CD4-positive, alpha-beta memory T cell (primary cell): ENCODE measurements at regions of chr11 and their contacts with region 1.

Region 1: DNA sequence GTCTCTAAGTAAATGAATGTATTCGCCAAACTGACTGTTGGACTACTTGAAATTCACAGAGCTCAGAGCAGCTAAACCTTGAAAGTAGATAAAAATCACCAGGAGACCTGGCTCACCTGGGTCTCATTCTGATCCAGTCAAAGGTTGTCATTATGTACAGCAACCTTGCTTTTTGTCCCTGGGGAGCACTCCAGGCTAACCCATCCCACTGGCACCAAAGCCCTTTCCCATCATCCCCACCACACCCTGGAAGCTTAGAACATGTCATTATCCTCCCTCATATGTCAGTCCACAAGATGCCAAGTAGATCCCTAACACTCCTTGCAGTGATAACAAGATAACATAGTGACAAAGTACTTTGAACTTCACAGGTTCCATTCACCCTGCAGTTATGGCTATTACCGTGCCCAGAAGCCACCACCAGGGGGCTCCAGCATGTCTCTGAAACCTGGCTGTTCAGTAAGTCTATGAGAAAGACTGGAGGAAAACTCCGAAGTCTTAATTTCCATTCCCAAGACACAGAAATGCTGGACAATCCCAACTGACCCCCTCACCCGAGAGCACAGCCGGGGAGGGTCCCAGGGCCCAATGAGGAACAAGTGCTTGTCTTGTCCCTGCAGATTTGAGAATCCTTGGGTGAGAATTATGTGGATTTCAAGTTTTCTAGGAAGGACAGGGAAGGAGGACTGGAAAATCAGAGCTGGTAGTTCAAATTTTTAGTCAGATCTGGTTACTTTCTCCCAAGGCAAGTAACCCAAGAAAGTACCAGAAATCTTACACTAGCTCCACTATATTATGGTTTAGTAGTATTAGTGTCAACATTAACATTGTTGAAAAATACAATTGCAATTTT is 43.0 kb upstream of the USP47 start:
- DNase-seq: peak; percentile 52 to 71 (median 68)
- H3K4me3 ChIP-seq: no peak overlapping the region
- H3K4me3 Mint-ChIP-seq: no peak overlapping the region
- H3K27ac ChIP-seq: no peak overlapping the region
- H3K27ac Mint-ChIP-seq: no peak overlapping the region
- H3K4me1 ChIP-seq: no peaks in the 10 kb centered on the region
- H3K4me1 Mint-ChIP-seq: no peaks in the 10 kb centered on the region
- H3K27me3 ChIP-seq: no peaks in the 10 kb centered on the region
- H3K27me3 Mint-ChIP-seq: peaks cover 21% of the 10 kb centered on the region in 2 donors

Region 2: DNA sequence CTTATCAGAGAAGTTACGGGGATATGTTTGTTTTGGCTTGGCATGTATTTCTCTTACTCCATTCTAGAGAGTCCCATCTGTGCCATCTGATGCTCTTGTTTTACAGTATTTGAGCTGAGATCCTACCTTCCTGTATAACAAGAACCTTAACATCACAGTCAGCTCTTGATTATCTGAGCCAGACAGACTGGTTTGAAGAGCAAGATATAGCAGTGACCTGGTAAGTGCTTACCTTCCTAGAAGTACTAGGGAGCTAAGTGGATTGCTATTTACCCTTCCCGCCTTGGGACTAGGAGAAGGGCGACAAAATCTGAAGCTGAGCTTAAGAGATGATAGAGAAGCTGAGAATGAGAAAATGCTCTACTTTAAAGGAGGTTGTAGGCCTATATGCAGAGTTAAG is 681.1 kb before region 1 on chr11:
- CTCF ChIA-PET with region 1: no interaction called
- POLR2A ChIA-PET with region 1: no interaction called
- intact Hi-C with region 1: no loop called
- DNase-seq: no peak
- H3K4me3 ChIP-seq: no peak overlapping the region
- H3K4me3 Mint-ChIP-seq: no peak overlapping the region
- H3K27ac ChIP-seq: no peak overlapping the region
- H3K27ac Mint-ChIP-seq: peak overlapping the region in 1 of 7 donors; percentile 48
- H3K4me1 ChIP-seq: no peaks in the 10 kb centered on the region
- H3K4me1 Mint-ChIP-seq: no peaks in the 10 kb centered on the region
- H3K27me3 ChIP-seq: no peaks in the 10 kb centered on the region
- H3K27me3 Mint-ChIP-seq: no peaks in the 10 kb centered on the region

Region 3: DNA sequence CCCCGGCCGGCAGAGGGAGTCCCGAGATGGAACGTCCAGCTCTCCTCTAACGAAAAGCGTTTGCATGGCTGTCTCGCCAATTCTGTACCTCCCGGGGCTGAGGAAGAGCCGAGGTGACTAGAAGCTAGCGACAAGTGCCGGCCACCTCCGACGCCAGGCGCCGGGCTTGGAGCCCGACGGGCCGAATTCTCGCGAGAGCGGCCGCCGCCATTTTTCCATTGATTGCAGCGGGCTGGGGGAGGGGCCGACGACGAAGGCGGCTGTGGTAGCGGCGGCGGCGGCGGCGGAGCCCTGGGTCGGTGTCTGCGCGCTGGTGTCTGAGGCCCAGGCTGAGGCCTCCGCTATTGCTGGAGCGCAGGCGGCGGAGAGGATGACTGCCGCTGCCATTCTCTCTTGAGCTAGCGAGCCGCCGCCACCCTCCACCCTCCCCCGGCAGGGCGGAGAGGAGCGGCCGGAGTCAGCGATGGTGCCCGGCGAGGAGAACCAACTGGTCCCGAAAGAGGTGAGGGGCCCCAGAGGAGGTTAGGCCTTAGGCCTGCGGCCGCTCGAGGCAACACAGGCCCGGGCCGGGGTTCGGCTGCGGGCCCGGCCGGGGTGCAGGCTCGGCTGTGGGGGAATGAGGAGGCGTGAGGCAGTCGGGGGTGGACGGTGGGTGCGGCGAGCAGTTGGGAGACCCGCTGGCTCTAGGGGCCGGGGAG is 43.1 kb after region 1 on chr11 and contains the start of gene USP47:
- CTCF ChIA-PET with region 1: interaction called, 89 read pairs
- POLR2A ChIA-PET with region 1: no interaction called
- intact Hi-C with region 1: no loop called
- DNase-seq: peak; percentile 91 to 96 (median 95)
- H3K4me3 ChIP-seq: peak within 1 kb of the TSS; percentile 27 to 85
- H3K4me3 Mint-ChIP-seq: peak within 1 kb of the TSS in 1 of 8 donors; percentile 86
- H3K27ac ChIP-seq: peak within 1 kb of the TSS; percentile 98
- H3K27ac Mint-ChIP-seq: peak within 1 kb of the TSS in 4 of 7 donors; percentile 88 to 90 (median 90)
- H3K4me1 ChIP-seq: peaks cover 39% of the 10 kb centered on the region
- H3K4me1 Mint-ChIP-seq: peaks cover 0 to 24% (median 2%) of the 10 kb centered on the region in 4 donors
- H3K27me3 ChIP-seq: no peaks in the 10 kb centered on the region
- H3K27me3 Mint-ChIP-seq: peaks cover 8 to 11% of the 10 kb centered on the region in 2 donors
- total RNA-seq, gene USP47: 62.2 to 65.9 TPM

Region 4: GRCh38 chr11:11876458-11876857 is 77.6 kb after region 1 on chr11:
- CTCF ChIA-PET with region 1: interaction called, 12 read pairs
- POLR2A ChIA-PET with region 1: no interaction called
- intact Hi-C with region 1: no loop called
- DNase-seq: peak in 1 of 5 donors; percentile 20
- H3K4me3 ChIP-seq: no peak overlapping the region
- H3K4me3 Mint-ChIP-seq: no peak overlapping the region
- H3K27ac ChIP-seq: no peak overlapping the region
- H3K27ac Mint-ChIP-seq: no peak overlapping the region
- H3K4me1 ChIP-seq: peaks cover 35% of the 10 kb centered on the region
- H3K4me1 Mint-ChIP-seq: peaks cover 28 to 64% (median 49%) of the 10 kb centered on the region in 4 donors
- H3K27me3 ChIP-seq: no peaks in the 10 kb centered on the region
- H3K27me3 Mint-ChIP-seq: no peaks in the 10 kb centered on the region

Region 5: DNA sequence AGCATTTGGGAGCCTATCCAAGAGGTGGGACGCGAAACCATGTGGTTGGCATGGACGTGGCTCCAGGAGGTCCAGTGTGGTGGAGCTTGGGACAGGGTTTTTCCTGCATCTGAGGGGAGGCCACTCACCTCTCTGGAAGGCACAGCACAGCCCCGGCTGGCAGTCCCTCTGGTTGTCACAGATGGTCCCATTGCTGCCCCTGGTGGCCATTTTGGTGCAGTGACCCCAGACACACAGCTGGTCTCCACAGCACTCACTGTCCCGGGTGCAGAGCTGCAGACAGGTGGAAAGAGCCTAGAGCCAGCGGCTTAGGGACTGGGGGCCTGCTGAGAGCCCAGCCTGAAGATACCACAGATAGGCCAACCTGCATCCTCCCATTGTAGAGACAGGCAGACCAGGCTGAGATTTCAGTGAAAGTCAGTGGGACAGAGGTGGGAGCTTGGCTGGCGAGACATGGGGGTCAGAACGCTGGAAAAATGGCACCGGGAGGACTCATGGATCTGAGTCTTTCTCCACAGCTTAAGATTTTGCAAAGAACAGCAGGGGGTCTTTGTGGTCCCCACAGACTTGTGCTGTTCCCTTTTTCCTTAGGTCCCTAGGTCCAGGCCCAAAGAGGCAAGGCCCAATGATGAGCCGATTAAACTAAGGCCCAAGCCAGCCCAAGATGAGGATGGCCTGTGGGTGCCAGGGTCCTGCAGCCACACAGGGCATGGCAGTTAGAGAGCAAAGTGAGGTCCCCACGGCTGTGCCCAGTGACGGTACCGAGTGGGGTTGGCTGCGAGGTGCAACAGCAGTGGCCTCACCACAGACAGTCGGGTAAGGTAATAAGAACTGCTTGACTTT is 168.2 kb after region 1 on chr11:
- CTCF ChIA-PET with region 1: interaction called, 18 read pairs
- POLR2A ChIA-PET with region 1: no interaction called
- intact Hi-C with region 1: loop called (anchors 1 kb)
- DNase-seq: peak; percentile 47 to 64 (median 60)
- H3K4me3 ChIP-seq: no peak overlapping the region
- H3K4me3 Mint-ChIP-seq: no peak overlapping the region
- H3K27ac ChIP-seq: no peak overlapping the region
- H3K27ac Mint-ChIP-seq: no peak overlapping the region
- H3K4me1 ChIP-seq: peaks cover 5% of the 10 kb centered on the region
- H3K4me1 Mint-ChIP-seq: peaks cover 4 to 15% (median 10%) of the 10 kb centered on the region in 4 donors
- H3K27me3 ChIP-seq: no peaks in the 10 kb centered on the region
- H3K27me3 Mint-ChIP-seq: peaks cover 0 to 1% of the 10 kb centered on the region in 2 donors

Region 6: GRCh38 chr11:12008790-12009616 is 210.2 kb after region 1 on chr11:
- CTCF ChIA-PET with region 1: no interaction called
- POLR2A ChIA-PET with region 1: no interaction called
- intact Hi-C with region 1: no loop called
- DNase-seq: no peak
- H3K4me3 ChIP-seq: peak overlapping the region in 1 of 2 donors; percentile 18
- H3K4me3 Mint-ChIP-seq: peak overlapping the region; percentile 59 to 81 (median 78)
- H3K27ac ChIP-seq: no peak overlapping the region
- H3K27ac Mint-ChIP-seq: no peak overlapping the region
- H3K4me1 ChIP-seq: peaks cover 8% of the 10 kb centered on the region
- H3K4me1 Mint-ChIP-seq: peaks cover 10 to 21% (median 10%) of the 10 kb centered on the region in 4 donors
- H3K27me3 ChIP-seq: peaks cover 41% of the 10 kb centered on the region
- H3K27me3 Mint-ChIP-seq: peaks cover 54 to 68% of the 10 kb centered on the region in 2 donors

Region 7: DNA sequence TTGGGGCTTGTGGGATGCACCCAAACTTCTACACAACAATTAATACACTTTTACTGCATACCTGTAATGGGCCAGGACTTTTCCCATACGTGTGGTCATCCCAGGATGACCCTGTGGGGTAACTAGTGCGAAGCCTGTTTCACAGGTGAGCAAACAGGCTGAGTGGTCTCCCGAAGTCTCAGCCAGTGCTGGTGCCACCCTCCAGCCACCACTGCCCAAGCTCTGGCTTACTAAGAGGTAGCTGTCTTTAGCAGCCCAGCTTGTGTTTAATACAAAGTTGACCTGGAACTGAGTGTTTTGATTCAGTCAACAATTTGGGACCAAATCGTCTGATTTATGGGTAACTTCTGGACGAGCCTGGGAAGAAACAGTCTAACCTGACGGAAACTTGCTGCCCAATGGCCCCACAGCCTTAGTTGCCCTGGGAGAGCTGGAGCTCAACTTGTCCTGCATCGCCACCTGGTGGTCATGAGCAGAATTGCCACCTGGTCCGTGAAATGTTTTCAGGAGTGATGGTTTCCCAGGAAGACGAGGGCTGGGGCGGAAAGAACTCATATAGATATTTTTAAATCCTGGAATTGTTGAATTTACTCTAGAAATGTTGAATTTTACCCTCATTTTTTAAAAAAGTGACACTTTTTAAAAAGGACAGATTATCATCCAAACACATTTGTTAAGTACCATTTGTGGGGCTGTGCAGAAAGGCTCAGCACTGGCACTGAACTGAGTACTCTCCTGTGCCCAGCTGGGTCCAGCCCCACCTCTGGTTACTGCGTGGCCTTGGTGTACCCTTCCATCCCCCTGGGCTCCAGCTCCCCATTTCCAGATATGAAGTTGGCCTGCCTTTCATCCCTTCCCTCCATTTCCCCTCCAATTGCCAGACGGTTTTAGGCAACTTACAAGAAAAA is 483.0 kb after region 1 on chr11:
- CTCF ChIA-PET with region 1: interaction called, 40 read pairs
- POLR2A ChIA-PET with region 1: no interaction called
- intact Hi-C with region 1: loop called (anchors 1 kb)
- DNase-seq: peak; percentile 63 to 75 (median 71)
- H3K4me3 ChIP-seq: no peak overlapping the region
- H3K4me3 Mint-ChIP-seq: no peak overlapping the region
- H3K27ac ChIP-seq: no peak overlapping the region
- H3K27ac Mint-ChIP-seq: no peak overlapping the region
- H3K4me1 ChIP-seq: no peaks in the 10 kb centered on the region
- H3K4me1 Mint-ChIP-seq: no peaks in the 10 kb centered on the region
- H3K27me3 ChIP-seq: no peaks in the 10 kb centered on the region
- H3K27me3 Mint-ChIP-seq: no peaks in the 10 kb centered on the region